Left ventricle myocardium superior (tissue), 1 donor: ENCODE measurements at regions of chr21 and their contacts with region 1.

Region 1: DNA sequence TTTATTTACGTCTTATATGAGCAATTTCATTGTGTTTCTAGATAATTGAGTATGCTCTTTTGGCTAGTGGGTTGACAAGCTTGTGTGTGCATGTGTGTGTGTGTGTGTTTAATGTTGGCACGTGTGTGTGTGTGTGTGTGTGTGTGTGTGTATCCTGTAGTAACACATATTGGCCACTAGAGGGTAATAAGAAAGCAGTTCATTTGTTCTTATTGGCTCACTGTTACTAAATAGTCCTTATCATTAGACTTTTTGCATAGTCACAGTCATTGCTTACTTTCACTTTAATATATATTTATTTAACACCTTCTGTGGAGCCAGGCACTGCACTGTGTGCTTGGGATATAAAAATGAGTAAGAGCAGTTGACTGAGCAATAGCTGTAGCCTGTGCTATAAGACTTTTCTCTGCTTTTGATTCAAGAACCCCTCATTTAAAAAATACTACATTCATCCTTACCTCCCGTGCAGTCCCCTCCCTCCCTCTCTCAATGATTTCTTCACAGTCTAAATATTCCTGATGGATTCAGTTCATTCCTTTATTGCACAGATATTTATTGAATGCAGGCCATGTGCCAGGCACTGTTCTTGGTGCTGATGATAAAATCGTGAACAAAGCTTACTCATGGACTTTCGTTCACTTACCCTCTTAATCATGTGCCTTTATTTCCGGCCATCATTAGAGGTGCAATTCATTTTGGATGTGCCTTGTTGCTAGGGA is 96.7 kb downstream of the DYRK1A start:
- DNase-seq: no peak
- ATAC-seq: peak; percentile 60

Region 2: GRCh38 chr21:37237764-37238163 is 225.5 kb before region 1 on chr21:
- intact Hi-C with region 1: no loop called
- DNase-seq: no peak
- ATAC-seq: no peak

Region 3: DNA sequence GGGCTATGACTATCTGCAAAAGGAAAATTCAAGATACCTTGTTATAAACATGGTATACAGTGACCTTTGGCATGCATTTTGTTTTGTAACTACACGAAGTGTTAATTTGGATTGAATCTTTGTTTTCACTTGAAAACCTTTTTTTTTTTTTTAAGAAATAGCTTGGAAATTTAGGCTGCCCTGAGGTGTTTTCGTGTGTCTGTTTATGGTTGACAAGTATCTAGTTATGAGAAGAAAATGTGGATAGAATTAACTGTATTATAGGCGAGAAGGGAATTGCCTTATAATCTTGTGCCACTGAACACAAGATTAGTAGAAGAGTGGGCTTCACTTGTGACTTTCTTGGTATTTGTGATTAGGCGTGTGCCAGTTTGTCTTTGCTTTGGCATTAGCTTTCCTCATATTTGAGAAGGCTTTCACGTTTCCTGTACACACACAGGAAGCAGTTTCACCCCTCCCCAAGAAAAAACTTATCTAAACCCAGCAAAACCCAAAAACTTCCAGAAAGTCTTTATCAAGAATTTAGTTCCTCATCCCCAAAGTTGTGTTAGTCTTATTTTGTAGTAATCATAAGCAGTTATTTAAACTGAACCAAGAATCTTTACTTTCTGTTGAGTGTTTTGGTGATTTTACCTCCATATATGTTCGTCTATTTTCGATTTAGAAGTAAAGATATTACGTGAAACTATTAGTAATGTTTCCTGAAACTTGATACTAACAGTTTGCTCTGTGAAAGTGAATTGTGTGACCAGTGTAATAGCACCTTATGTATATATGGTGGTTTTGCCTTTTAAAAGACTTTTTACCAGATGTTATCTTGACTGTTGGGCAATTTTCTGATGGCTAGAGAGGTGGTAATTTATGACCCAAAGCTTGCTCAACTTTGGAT is 92.8 kb before region 1 on chr21:
- intact Hi-C with region 1: loop called (anchors 10 kb)
- DNase-seq: no peak
- ATAC-seq: no peak

Region 4: DNA sequence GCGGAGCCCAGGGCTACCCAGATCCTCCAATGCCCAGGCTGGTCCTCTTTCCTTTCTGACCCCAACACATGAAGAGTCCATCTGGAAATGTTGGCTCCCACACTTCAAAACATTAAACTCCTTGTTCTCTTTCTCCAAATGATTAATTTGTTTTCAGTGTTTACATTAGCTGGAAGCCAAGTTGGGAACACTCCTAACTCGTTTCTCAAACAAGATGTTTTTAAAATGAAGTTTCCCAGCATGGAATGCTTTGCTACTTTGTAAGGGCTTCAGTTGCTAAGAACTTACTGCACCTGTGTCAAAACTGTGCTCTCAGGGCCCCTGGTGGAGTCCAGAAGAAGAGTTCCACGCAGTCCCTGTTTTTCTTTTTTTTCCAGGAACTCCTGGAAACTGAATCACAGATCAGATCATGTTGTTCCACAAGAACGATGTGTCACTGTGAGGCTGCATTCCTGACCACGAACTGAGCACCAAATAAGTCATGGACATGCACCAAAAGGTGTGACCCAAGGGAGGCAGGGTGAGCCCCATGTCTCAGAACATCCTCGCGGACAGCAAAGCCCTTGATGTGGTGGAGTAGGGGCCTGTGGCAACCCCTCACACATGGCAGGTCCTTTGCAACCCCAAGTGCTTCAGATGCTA is 195.7 kb after region 1 on chr21:
- intact Hi-C with region 1: no loop called
- DNase-seq: no peak
- ATAC-seq: peak; percentile 49